GM12878 (cell line): ENCODE measurements at regions of chr2 and their contacts with region 1.

Region 1: GRCh38 chr2:55014962-55015939 is 35.0 kb downstream of the RTN4 start:
- DNase-seq: no peak
- ATAC-seq: peak; percentile 49
- H3K4me3 ChIP-seq: no peak overlapping the region
- H3K27ac ChIP-seq: no peak overlapping the region
- H3K4me1 ChIP-seq: peaks cover 15% of the 10 kb centered on the region; the same call in 1 of the 2 replicates
- H3K27me3 ChIP-seq: no peaks in the 10 kb centered on the region
- CTCF ChIP-seq: peak; percentile 51 to 64 (median 55); a peak in 5 of 6 replicates
- EP300 ChIP-seq: no peak
- POLR2A ChIP-seq: no peak
- RAD21 ChIP-seq: peak; percentile 93

Region 2: GRCh38 chr2:54139210-54139609 is 876.0 kb before region 1 on chr2:
- CTCF ChIA-PET with region 1: no interaction called
- POLR2A ChIA-PET with region 1: no interaction called
- RAD21 ChIA-PET with region 1: no interaction called
- SMC1A ChIA-PET with region 1: no interaction called
- in situ Hi-C with region 1: no loop called
- intact Hi-C with region 1: no loop called
- DNase-seq: no peak
- ATAC-seq: no peak
- H3K4me3 ChIP-seq: no peak overlapping the region
- H3K27ac ChIP-seq: no peak overlapping the region
- H3K4me1 ChIP-seq: no peaks in the 10 kb centered on the region
- H3K27me3 ChIP-seq: no peaks in the 10 kb centered on the region
- CTCF ChIP-seq: no peak
- EP300 ChIP-seq: no peak
- POLR2A ChIP-seq: no peak
- RAD21 ChIP-seq: no peak

Region 3: GRCh38 chr2:54838585-54839035 is 176.6 kb before region 1 on chr2:
- CTCF ChIA-PET with region 1: interaction called, 14 read pairs
- POLR2A ChIA-PET with region 1: no interaction called
- RAD21 ChIA-PET with region 1: interaction called, 6 read pairs
- SMC1A ChIA-PET with region 1: interaction called, 14 read pairs
- in situ Hi-C with region 1: no loop called
- intact Hi-C with region 1: no loop called
- DNase-seq: peak; percentile 20
- ATAC-seq: peak; percentile 98
- H3K4me3 ChIP-seq: no peak overlapping the region
- H3K27ac ChIP-seq: no peak overlapping the region
- H3K4me1 ChIP-seq: no peaks in the 10 kb centered on the region
- H3K27me3 ChIP-seq: no peaks in the 10 kb centered on the region
- CTCF ChIP-seq: peak; percentile 82 to 91 (median 91)
- EP300 ChIP-seq: no peak
- POLR2A ChIP-seq: no peak
- RAD21 ChIP-seq: peak; percentile 74

Region 4: GRCh38 chr2:54969940-54970338 is 45.3 kb before region 1 on chr2:
- CTCF ChIA-PET with region 1: interaction called, 10 read pairs
- POLR2A ChIA-PET with region 1: no interaction called
- RAD21 ChIA-PET with region 1: interaction called, 3 read pairs
- SMC1A ChIA-PET with region 1: interaction called, 12 read pairs
- in situ Hi-C with region 1: no loop called
- intact Hi-C with region 1: no loop called
- DNase-seq: no peak
- ATAC-seq: no peak
- H3K4me3 ChIP-seq: no peak overlapping the region
- H3K27ac ChIP-seq: no peak overlapping the region
- H3K4me1 ChIP-seq: no peaks in the 10 kb centered on the region; the same call in 1 of the 2 replicates
- H3K27me3 ChIP-seq: no peaks in the 10 kb centered on the region
- CTCF ChIP-seq: no peak
- EP300 ChIP-seq: no peak
- POLR2A ChIP-seq: no peak
- RAD21 ChIP-seq: no peak

Region 5: DNA sequence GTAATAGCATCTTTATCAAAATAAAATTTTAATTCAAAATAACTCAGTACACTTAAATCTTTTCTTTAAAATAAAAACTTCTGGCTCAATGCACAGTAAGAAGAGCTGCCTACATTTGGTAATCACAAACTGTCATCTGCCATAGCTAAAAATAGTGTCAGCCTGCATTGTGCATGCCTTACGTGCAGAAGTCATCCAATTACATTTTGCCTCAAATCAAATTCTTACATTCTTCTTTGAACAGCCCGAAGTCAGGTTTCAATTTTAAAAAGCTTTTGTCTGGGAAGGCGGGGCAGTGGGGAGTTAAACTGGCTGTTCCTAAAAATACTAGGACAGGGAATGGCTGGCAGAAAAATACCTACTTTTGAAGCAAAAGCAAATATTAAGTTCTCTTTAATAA is 16.1 kb before region 1 on chr2:
- CTCF ChIA-PET with region 1: interaction called, 9 read pairs
- POLR2A ChIA-PET with region 1: interaction called, 5 read pairs
- RAD21 ChIA-PET with region 1: interaction called, 18 read pairs
- SMC1A ChIA-PET with region 1: interaction called, 19 read pairs
- in situ Hi-C with region 1: no loop called
- intact Hi-C with region 1: no loop called
- DNase-seq: no peak
- ATAC-seq: peak; percentile 61
- H3K4me3 ChIP-seq: peak overlapping the region; percentile 45; the same call in 1 of the 2 replicates
- H3K27ac ChIP-seq: peak overlapping the region; percentile 1; the same call in 1 of the 2 replicates
- H3K4me1 ChIP-seq: peaks cover 18% of the 10 kb centered on the region; the same call in 1 of the 2 replicates
- H3K27me3 ChIP-seq: no peaks in the 10 kb centered on the region
- CTCF ChIP-seq: no peak
- EP300 ChIP-seq: 0 out of 4 replicates have a peak, but pooled peaks of 1 of the 2 experiments have one; percentile 10
- POLR2A ChIP-seq: no peak
- RAD21 ChIP-seq: no peak

Region 6: GRCh38 chr2:55033066-55033742 is 18.0 kb after region 1 on chr2:
- CTCF ChIA-PET with region 1: interaction called, 13 read pairs
- POLR2A ChIA-PET with region 1: interaction called, 3 read pairs
- RAD21 ChIA-PET with region 1: interaction called, 14 read pairs
- SMC1A ChIA-PET with region 1: interaction called, 20 read pairs
- in situ Hi-C with region 1: no loop called
- intact Hi-C with region 1: no loop called
- DNase-seq: peak; percentile 62
- ATAC-seq: peak; percentile 96
- H3K4me3 ChIP-seq: peak overlapping the region; percentile 2; the same call in 1 of the 2 replicates
- H3K27ac ChIP-seq: peak overlapping the region; percentile 32
- H3K4me1 ChIP-seq: peaks cover 19% of the 10 kb centered on the region
- H3K27me3 ChIP-seq: no peaks in the 10 kb centered on the region
- CTCF ChIP-seq: no peak
- EP300 ChIP-seq: no peak
- POLR2A ChIP-seq: no peak
- RAD21 ChIP-seq: no peak

Region 7: GRCh38 chr2:55168221-55169154 is 153.2 kb after region 1 on chr2:
- CTCF ChIA-PET with region 1: interaction called, 342 read pairs
- POLR2A ChIA-PET with region 1: interaction called, 4 read pairs
- RAD21 ChIA-PET with region 1: interaction called, 49 read pairs
- SMC1A ChIA-PET with region 1: interaction called, 260 read pairs
- in situ Hi-C with region 1: loop called (anchors 5 kb)
- intact Hi-C with region 1: loop called (anchors 1 kb)
- DNase-seq: no peak
- ATAC-seq: peak; percentile 83
- H3K4me3 ChIP-seq: no peak overlapping the region
- H3K27ac ChIP-seq: no peak overlapping the region
- H3K4me1 ChIP-seq: no peaks in the 10 kb centered on the region
- H3K27me3 ChIP-seq: no peaks in the 10 kb centered on the region
- CTCF ChIP-seq: peak; percentile 73 to 74 (median 73)
- EP300 ChIP-seq: no peak
- POLR2A ChIP-seq: no peak
- RAD21 ChIP-seq: peak; percentile 89